ENCODE measurements at regions of chr3 and their contacts with region 1.

Region 1: DNA sequence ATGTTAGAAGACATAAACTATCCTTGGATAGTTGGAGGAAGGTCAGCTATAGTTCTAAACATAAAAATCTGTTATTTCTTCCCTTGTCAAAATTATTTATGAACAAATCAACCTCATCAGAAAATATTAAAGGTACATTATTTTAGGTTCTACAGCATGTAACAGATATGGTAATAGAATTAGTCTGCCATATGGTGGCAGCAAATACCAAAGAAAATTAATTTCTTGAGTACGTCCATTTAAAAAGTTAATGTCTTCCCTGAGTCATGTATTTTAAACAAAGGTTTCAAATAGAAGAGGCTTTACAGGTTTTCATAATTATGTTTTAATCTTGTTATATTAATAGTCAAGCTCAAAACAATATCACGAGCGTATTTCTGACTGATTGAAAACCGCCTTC is 17.9 kb upstream of the ANKRD28 start:
- DNase-seq: no peak
- H3K4me3 ChIP-seq: no peak overlapping the region
- H3K27ac ChIP-seq: no peak overlapping the region
- H3K4me1 ChIP-seq: peaks cover 0 to 18% (median 15%) of the 10 kb centered on the region in 4 donors
- H3K27me3 ChIP-seq: no peaks in the 10 kb centered on the region
- CTCF ChIP-seq: peak in 1 of 4 experiments; percentile 45
- EP300 ChIP-seq: no peak
- POLR2A ChIP-seq: no peak

Region 2: GRCh38 chr3:15629860-15630597 is 185.7 kb before region 1 on chr3:
- intact Hi-C with region 1: loop called (anchors 1 kb)
- DNase-seq: peak; percentile 85
- H3K4me3 ChIP-seq: peak overlapping the region; percentile 18 to 36 (median 28)
- H3K27ac ChIP-seq: peak overlapping the region; percentile 59 to 90 (median 76)
- H3K4me1 ChIP-seq: peaks cover 0 to 46% (median 44%) of the 10 kb centered on the region in 4 donors
- H3K27me3 ChIP-seq: no peaks in the 10 kb centered on the region
- CTCF ChIP-seq: peak in 3 of 4 experiments; percentile 72 to 87 (median 74)
- EP300 ChIP-seq: no peak
- POLR2A ChIP-seq: no peak

Region 3: GRCh38 chr3:16048435-16049318 is 233.0 kb after region 1 on chr3:
- intact Hi-C with region 1: loop called (anchors 5 kb)
- DNase-seq: peak; percentile 82
- H3K4me3 ChIP-seq: no peak overlapping the region
- H3K27ac ChIP-seq: no peak overlapping the region
- H3K4me1 ChIP-seq: peaks cover 0 to 5% (median 2%) of the 10 kb centered on the region in 4 donors
- H3K27me3 ChIP-seq: no peaks in the 10 kb centered on the region
- CTCF ChIP-seq: peak; percentile 74 to 86 (median 76)
- EP300 ChIP-seq: no peak
- POLR2A ChIP-seq: no peak

Region 4: GRCh38 chr3:16247276-16248061 is 431.8 kb after region 1 on chr3:
- intact Hi-C with region 1: loop called (anchors 5 kb)
- DNase-seq: peak; percentile 87
- H3K4me3 ChIP-seq: no peak overlapping the region
- H3K27ac ChIP-seq: no peak overlapping the region
- H3K4me1 ChIP-seq: peaks cover 0 to 19% (median 4%) of the 10 kb centered on the region in 4 donors
- H3K27me3 ChIP-seq: no peaks in the 10 kb centered on the region
- CTCF ChIP-seq: peak; percentile 78 to 96 (median 82)
- EP300 ChIP-seq: no peak
- POLR2A ChIP-seq: no peak

Region 5: GRCh38 chr3:16600780-16601539 is 785.3 kb after region 1 on chr3:
- intact Hi-C with region 1: no loop called
- DNase-seq: peak; percentile 89
- H3K4me3 ChIP-seq: no peak overlapping the region
- H3K27ac ChIP-seq: no peak overlapping the region
- H3K4me1 ChIP-seq: peaks cover 0 to 4% (median 0%) of the 10 kb centered on the region in 4 donors
- H3K27me3 ChIP-seq: no peaks in the 10 kb centered on the region
- CTCF ChIP-seq: peak; percentile 53 to 79 (median 71)
- EP300 ChIP-seq: no peak
- POLR2A ChIP-seq: no peak